CD4-positive, alpha-beta T cell (primary cell): ENCODE measurements at regions of chr7 and their contacts with region 1.

Region 1: GRCh38 chr7:50467817-50468610 is 17.9 kb upstream of the FIGNL1 start:
- DNase-seq: peak; percentile 66 to 88 (median 74)
- ATAC-seq: peak; percentile 99
- H3K4me3 ChIP-seq: peak overlapping the region; percentile 29
- H3K4me3 Mint-ChIP-seq: peak overlapping the region; percentile 63
- H3K27ac ChIP-seq: no peak overlapping the region
- H3K27ac Mint-ChIP-seq: no peak overlapping the region
- H3K4me1 ChIP-seq: peaks cover 13% of the 10 kb centered on the region
- H3K4me1 Mint-ChIP-seq: peaks cover 12% of the 10 kb centered on the region
- H3K27me3 ChIP-seq: no peaks in the 10 kb centered on the region
- H3K27me3 Mint-ChIP-seq: no peaks in the 10 kb centered on the region
- CTCF ChIP-seq: peak; percentile 82

Region 2: GRCh38 chr7:49875336-49875735 is 592.7 kb before region 1 on chr7:
- CTCF ChIA-PET with region 1: no interaction called
- POLR2A ChIA-PET with region 1: no interaction called
- intact Hi-C with region 1: no loop called
- DNase-seq: no peak
- ATAC-seq: no peak
- H3K4me3 ChIP-seq: no peak overlapping the region
- H3K4me3 Mint-ChIP-seq: no peak overlapping the region
- H3K27ac ChIP-seq: no peak overlapping the region
- H3K27ac Mint-ChIP-seq: no peak overlapping the region
- H3K4me1 ChIP-seq: no peaks in the 10 kb centered on the region
- H3K4me1 Mint-ChIP-seq: no peaks in the 10 kb centered on the region
- H3K27me3 ChIP-seq: no peaks in the 10 kb centered on the region
- H3K27me3 Mint-ChIP-seq: peaks cover 5% of the 10 kb centered on the region
- CTCF ChIP-seq: no peak

Region 3: DNA sequence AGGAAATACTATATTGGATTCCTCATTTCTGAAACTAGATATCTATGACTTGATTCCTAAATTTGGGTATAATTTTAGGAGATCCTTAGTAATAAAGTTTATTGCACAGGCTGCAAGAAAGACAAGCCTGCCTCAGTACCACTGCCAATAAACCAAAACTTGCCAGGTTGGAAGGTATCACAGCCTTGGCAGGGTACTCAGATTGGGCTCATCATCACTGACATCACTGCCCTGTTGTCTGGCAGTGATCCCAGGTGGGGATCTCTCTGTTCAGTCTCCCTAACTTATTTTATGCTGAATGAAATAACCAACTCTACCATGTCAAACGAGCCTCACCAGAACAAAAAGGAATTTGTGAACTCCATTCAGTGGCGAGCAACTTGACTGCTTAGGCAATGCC is 36.7 kb before region 1 on chr7:
- CTCF ChIA-PET with region 1: no interaction called
- POLR2A ChIA-PET with region 1: no interaction called
- intact Hi-C with region 1: no loop called
- DNase-seq: no peak
- ATAC-seq: no peak
- H3K4me3 ChIP-seq: no peak overlapping the region
- H3K4me3 Mint-ChIP-seq: no peak overlapping the region
- H3K27ac ChIP-seq: no peak overlapping the region
- H3K27ac Mint-ChIP-seq: no peak overlapping the region
- H3K4me1 ChIP-seq: no peaks in the 10 kb centered on the region
- H3K4me1 Mint-ChIP-seq: no peaks in the 10 kb centered on the region
- H3K27me3 ChIP-seq: no peaks in the 10 kb centered on the region
- H3K27me3 Mint-ChIP-seq: no peaks in the 10 kb centered on the region
- CTCF ChIP-seq: no peak

Region 4: DNA sequence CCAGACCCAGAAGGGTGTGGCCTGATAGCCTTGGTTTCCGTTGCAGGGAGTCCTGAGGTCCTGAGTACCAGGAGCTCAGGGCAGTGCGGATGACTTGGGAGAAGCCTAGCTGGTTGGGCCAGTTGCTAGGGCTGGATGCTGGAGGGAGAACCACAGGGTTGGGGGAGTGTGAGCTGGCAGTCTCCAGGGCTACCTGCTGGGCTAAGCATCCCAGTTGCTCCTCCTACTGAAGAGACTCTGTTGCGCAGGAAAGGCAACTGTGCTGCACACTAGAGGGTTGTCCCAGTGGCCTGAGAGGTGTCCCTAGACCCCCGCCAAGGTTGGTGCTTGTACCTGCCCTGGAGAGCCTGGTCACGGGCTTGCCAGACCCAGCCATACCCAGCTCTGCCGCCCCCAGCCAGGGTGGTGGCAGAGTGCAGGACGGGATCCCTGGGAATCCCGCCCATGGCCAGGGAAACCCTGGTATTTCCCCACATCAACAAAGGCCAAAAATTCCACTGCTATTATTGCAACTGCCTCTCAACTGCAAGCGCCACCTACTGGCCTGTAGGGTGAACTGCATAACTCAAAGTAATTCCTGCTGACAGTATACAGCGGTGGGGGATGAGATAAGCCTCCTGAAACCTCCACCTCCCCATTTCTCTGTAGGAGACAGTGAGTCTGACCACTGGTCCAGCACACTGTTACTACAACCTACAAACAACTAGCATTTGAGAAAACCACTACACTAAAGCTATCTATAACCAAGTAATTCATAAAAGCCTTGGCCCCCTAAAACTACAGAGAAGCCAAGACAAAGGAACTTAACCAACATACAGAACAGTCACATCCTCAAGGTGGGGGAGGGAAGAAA is 164.8 kb after region 1 on chr7:
- CTCF ChIA-PET with region 1: interaction called, 3 read pairs
- POLR2A ChIA-PET with region 1: interaction called, 4 read pairs
- intact Hi-C with region 1: loop called (anchors 1 kb)
- DNase-seq: peak; percentile 31 to 78 (median 48)
- ATAC-seq: peak; percentile 76
- H3K4me3 ChIP-seq: no peak overlapping the region
- H3K4me3 Mint-ChIP-seq: no peak overlapping the region
- H3K27ac ChIP-seq: no peak overlapping the region
- H3K27ac Mint-ChIP-seq: no peak overlapping the region
- H3K4me1 ChIP-seq: peaks cover 6% of the 10 kb centered on the region
- H3K4me1 Mint-ChIP-seq: no peaks in the 10 kb centered on the region
- H3K27me3 ChIP-seq: peaks cover 0 to 4% of the 10 kb centered on the region in 2 experiments
- H3K27me3 Mint-ChIP-seq: peaks cover 7% of the 10 kb centered on the region
- CTCF ChIP-seq: peak; percentile 96

Region 5: DNA sequence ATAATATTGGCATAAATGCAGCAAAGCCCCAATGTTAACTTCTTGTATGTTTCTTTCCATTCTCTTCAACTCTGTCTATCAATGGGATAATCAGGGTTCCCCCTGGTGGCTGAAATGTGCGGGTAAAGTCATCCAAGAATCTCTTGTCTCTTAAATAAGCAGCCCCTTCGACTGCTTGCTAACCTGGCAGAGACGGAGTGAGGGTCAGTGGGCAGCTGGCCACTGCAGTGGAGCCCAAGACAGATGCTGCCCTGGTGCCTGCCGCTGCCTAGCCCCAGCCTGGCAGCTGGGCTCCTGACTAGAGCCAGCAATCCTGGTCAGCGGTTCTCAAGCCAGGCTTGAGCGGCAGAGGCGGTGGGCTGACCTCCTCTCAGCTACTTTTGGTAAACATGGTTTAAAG is 599.7 kb after region 1 on chr7:
- CTCF ChIA-PET with region 1: no interaction called
- POLR2A ChIA-PET with region 1: no interaction called
- intact Hi-C with region 1: loop called in 1 of 2 experiments (anchors 2 kb)
- DNase-seq: peak; percentile 7 to 66 (median 32)
- ATAC-seq: no peak
- H3K4me3 ChIP-seq: no peak overlapping the region
- H3K4me3 Mint-ChIP-seq: no peak overlapping the region
- H3K27ac ChIP-seq: no peak overlapping the region
- H3K27ac Mint-ChIP-seq: no peak overlapping the region
- H3K4me1 ChIP-seq: no peaks in the 10 kb centered on the region
- H3K4me1 Mint-ChIP-seq: no peaks in the 10 kb centered on the region
- H3K27me3 ChIP-seq: no peaks in the 10 kb centered on the region
- H3K27me3 Mint-ChIP-seq: no peaks in the 10 kb centered on the region
- CTCF ChIP-seq: peak; percentile 62

Region 6: GRCh38 chr7:51141451-51142003 is 673.5 kb after region 1 on chr7:
- CTCF ChIA-PET with region 1: no interaction called
- POLR2A ChIA-PET with region 1: no interaction called
- intact Hi-C with region 1: loop called in 1 of 2 experiments (anchors 5 kb)
- DNase-seq: peak in 3 of 14 experiments; percentile 10 to 42 (median 38)
- ATAC-seq: peak; percentile 43
- H3K4me3 ChIP-seq: no peak overlapping the region
- H3K4me3 Mint-ChIP-seq: no peak overlapping the region
- H3K27ac ChIP-seq: no peak overlapping the region
- H3K27ac Mint-ChIP-seq: no peak overlapping the region
- H3K4me1 ChIP-seq: no peaks in the 10 kb centered on the region
- H3K4me1 Mint-ChIP-seq: peaks cover 14% of the 10 kb centered on the region
- H3K27me3 ChIP-seq: no peaks in the 10 kb centered on the region
- H3K27me3 Mint-ChIP-seq: no peaks in the 10 kb centered on the region
- CTCF ChIP-seq: no peak

Region 7: GRCh38 chr7:51162724-51163329 is 694.8 kb after region 1 on chr7:
- CTCF ChIA-PET with region 1: interaction called, 8 read pairs
- POLR2A ChIA-PET with region 1: no interaction called
- intact Hi-C with region 1: loop called (anchors 5 kb)
- DNase-seq: peak; percentile 30 to 73 (median 48)
- ATAC-seq: peak; percentile 71
- H3K4me3 ChIP-seq: no peak overlapping the region
- H3K4me3 Mint-ChIP-seq: no peak overlapping the region
- H3K27ac ChIP-seq: no peak overlapping the region
- H3K27ac Mint-ChIP-seq: no peak overlapping the region
- H3K4me1 ChIP-seq: no peaks in the 10 kb centered on the region
- H3K4me1 Mint-ChIP-seq: peaks cover 4% of the 10 kb centered on the region
- H3K27me3 ChIP-seq: peaks cover 0 to 4% of the 10 kb centered on the region in 2 experiments
- H3K27me3 Mint-ChIP-seq: peaks cover 32% of the 10 kb centered on the region
- CTCF ChIP-seq: peak; percentile 77